PC-9 (cell line): ENCODE measurements at regions of chr18 and their contacts with region 1.

Region 1: GRCh38 chr18:13275075-13275474 is 56.5 kb downstream of the LDLRAD4 start:
- DNase-seq: no peak
- H3K4me3 ChIP-seq: no peak overlapping the region
- H3K27ac ChIP-seq: no peak overlapping the region
- H3K4me1 ChIP-seq: no peaks in the 10 kb centered on the region
- H3K27me3 ChIP-seq: peaks cover 92% of the 10 kb centered on the region
- CTCF ChIP-seq: no peak

Region 2: DNA sequence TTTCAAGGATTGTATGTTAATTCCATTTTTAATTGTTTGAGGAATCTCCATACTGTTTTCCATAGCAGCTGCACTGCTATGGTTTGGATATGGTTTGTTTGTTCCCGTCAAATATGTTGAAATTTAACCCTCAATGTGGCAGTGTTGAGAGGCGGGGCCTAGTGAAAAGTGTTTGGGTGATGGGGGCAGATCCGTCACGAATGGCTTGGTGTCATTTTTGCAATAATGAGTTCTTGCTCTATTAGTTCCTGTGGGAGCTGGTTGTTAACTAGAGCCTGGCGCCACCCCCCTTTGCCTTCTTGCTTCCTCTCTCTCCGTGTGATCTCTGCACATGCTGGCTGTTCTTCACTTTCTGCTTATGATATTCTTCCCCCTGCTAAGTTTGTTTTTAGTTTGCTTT is 127.9 kb before region 1 on chr18:
- CTCF ChIA-PET with region 1: no interaction called
- POLR2A ChIA-PET with region 1: interaction called, 16 read pairs
- intact Hi-C with region 1: no loop called
- DNase-seq: no peak
- H3K4me3 ChIP-seq: no peak overlapping the region
- H3K27ac ChIP-seq: no peak overlapping the region
- H3K4me1 ChIP-seq: no peaks in the 10 kb centered on the region
- H3K27me3 ChIP-seq: peaks cover 14% of the 10 kb centered on the region; the same call in 1 of the 2 replicates
- CTCF ChIP-seq: no peak